WTC11 (cell line): ENCODE measurements at regions of chrX and their contacts with region 1.

Region 1: DNA sequence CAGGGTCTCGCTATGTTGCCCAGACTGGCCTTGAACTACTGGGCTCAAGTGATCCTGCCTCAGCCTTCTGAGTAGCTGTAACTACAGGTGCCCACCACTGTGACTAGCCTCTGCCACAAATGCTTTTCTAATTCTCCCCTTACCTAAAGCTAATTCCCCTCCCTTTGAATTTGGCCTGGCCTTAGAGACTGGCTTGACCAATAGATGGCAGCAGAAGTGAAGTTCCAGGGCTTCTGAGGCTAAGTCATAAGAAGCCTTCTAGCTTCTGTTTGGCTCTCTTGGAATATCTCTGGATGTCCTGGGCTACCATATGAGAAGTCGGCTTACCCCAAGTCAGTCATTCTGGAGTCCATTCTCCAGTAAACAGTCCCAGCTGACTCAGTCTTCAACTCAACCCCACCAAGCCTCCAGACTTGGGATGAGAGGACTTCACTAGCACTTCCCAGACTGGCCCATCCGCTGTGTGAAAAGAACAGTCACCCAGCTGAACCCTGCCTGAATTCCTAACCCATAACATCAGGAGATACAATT is 61.0 kb downstream of the HPRT1 start:
- DNase-seq: peak; percentile 35
- ATAC-seq: peak; percentile 99
- H3K4me3 Mint-ChIP-seq: no peak overlapping the region
- H3K27ac Mint-ChIP-seq: no peak overlapping the region
- H3K4me1 Mint-ChIP-seq: no peaks in the 10 kb centered on the region
- H3K27me3 Mint-ChIP-seq: no peaks in the 10 kb centered on the region
- CTCF ChIP-seq: no peak

Region 2: GRCh38 chrX:134501941-134502340 is 19.0 kb before region 1 on chrX:
- CTCF ChIA-PET with region 1: no interaction called
- POLR2A ChIA-PET with region 1: no interaction called
- DNase-seq: no peak
- ATAC-seq: no peak
- H3K4me3 Mint-ChIP-seq: no peak overlapping the region
- H3K27ac Mint-ChIP-seq: no peak overlapping the region
- H3K4me1 Mint-ChIP-seq: no peaks in the 10 kb centered on the region
- H3K27me3 Mint-ChIP-seq: no peaks in the 10 kb centered on the region
- CTCF ChIP-seq: no peak

Region 3: DNA sequence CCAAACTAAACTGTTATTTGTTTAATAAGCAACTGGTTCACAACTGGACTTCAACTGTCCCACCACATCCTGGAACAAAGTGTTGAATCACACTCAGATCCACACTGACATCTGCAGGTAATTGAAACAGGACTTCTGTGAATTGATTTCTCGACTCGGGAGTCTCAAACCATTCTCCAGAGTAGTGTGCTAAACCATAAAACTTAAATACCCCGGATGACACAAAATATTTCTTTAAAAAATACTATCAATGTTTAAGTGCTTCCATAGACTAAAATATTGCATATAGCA is 232.7 kb after region 1 on chrX:
- CTCF ChIA-PET with region 1: interaction called, 16 read pairs
- POLR2A ChIA-PET with region 1: no interaction called
- DNase-seq: no peak
- ATAC-seq: no peak
- H3K4me3 Mint-ChIP-seq: no peak overlapping the region
- H3K27ac Mint-ChIP-seq: no peak overlapping the region
- H3K4me1 Mint-ChIP-seq: no peaks in the 10 kb centered on the region
- H3K27me3 Mint-ChIP-seq: no peaks in the 10 kb centered on the region
- CTCF ChIP-seq: no peak

Region 4: GRCh38 chrX:134782796-134783195 is 261.9 kb after region 1 on chrX:
- CTCF ChIA-PET with region 1: interaction called, 20 read pairs
- POLR2A ChIA-PET with region 1: interaction called, 3 read pairs
- DNase-seq: no peak
- ATAC-seq: no peak
- H3K4me3 Mint-ChIP-seq: no peak overlapping the region
- H3K27ac Mint-ChIP-seq: no peak overlapping the region
- H3K4me1 Mint-ChIP-seq: no peaks in the 10 kb centered on the region
- H3K27me3 Mint-ChIP-seq: no peaks in the 10 kb centered on the region
- CTCF ChIP-seq: no peak